ENCODE measurements at regions of chr2 and their contacts with region 1.

Region 1: DNA sequence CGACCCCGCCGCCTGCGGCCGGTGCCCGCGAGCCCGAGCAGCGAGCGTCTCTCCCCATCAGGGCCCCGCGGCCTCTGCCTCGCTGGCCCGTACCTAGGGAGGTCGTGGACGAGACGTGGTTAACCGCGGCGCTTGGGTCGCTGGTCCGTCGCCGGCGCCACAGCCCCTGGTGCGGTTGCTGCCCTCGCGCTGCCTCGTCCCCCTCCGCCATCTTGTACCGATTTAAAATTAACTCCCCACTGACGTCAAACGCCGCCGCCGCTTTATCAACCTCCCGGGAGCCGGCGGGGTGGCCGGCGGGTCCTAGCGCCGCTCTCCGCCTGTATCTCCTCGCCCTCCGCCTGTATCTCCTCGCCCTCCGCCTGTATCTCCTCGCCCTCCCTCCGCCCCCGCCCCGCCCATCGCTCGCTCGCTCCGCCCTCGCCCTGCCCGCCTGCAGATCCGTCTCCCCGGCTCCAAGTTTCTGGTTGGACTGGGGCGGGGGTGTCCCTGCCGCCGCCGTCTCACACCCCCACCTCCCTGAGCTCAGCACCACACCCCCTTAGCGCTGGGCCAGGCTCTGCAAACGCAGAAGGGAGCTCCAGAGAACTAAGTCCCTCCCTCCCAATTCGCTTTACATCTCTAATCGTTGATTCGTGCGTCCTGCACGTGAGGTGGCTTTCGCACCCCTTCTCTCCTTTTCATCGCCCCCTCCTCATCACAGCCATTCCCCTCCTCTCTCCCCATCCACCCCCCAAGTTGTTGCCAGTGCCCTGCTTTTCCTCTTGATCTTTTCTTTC is at the start of gene ATL2:
- DNase-seq: peak; percentile 99
- ATAC-seq: peak; percentile 94
- total RNA-seq, gene ATL2: 30.9 TPM

Region 2: DNA sequence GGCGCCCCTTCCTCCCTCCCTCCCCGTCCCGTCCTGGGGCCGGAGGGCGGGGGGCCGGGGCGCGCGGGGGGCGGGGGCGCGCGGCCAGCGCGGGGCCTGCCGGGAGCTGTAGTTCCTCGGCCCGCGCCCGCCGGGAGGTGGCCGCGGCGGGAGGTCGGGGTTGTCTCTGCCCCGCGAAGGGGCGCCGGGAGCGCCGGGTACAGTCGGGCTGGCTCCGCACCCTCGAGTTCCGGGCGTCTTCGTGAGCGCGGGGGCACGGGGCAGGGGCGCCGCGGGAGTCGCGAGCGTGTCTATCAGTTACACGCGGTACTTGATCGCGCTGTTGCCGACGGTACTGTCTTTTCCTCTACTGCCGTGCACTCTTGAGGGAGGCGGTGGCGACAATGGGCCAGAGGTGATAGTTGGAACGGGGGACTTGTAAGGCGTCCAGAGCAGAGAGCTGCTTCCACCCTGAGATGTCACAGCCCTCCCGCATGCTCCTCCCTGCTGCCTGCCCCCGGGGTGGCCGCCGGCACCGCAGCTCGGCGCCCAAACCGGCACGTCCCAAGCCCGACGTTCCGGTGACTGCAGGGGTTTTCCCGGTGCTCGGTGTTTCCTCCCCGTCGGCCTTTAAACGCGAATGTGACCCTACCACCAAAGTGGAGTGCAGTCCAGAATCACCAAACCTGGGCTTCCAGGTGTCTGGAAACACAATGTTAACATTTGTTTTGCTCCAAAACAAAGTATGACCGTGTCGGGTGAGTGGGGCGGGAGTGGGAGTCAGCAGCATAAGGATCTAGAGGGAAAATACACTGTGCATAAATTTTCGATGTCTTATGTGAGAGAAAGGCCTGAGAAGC is 1052.2 kb before region 1 on chr2 and contains the start of gene PRKD3:
- intact Hi-C with region 1: loop called (anchors 10 kb)
- DNase-seq: no peak
- ATAC-seq: peak; percentile 92
- total RNA-seq, gene PRKD3: 10.4 TPM

Region 3: DNA sequence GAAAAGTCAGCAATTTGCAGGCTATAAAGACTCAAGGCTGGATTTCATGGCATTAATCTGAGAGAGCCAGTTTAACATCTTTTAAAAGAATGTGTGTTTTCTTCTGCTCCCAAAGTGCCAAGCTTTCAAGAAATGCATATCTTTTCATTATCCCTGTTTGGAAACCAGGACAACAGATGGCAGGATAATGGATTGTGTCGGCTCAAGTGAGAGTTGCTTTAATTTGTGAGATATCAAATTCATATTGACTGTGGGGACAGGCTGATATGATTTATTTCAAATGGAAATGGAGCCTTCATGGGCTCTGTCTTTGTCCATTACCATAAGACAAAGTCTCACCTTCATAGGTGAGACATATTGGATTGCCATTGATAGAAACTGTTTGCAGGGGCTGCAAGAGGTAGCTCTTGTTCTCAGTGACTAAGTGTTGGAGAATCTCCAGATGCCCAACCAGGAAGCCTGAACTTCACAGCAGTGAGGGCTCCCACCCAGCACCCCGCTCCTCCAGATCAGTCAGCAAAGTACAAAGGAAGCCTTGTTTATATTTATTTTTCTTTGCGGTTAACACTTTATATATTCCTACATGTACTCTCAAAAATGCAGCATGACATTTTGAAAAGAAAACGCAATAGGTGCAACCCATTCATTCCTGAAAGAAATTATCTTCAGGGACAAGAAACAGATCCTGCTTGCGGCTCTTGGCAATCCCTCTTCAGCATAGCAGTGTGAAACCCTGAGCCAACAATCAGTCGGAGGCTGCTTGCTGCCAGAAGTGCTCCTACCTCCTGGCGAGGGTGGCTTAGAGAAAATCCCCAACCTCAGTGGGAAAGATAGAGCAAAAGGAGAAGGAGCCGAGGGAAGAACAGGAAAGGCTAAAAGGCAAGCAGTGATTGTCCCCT is 65.7 kb after region 1 on chr2:
- intact Hi-C with region 1: loop called (anchors 10 kb)
- DNase-seq: no peak
- ATAC-seq: peak; percentile 76

Measured in Right ventricle myocardium superior (tissue), 1 donor.